ENCODE measurements at regions of chr16 and their contacts with region 1.

Region 1: GRCh38 chr16:85821441-85822135 is 22.1 kb downstream of the COX4I1 start:
- DNase-seq: peak; percentile 79
- ATAC-seq: peak; percentile 90 to 91

Region 2: GRCh38 chr16:85986931-85987749 is 165.6 kb after region 1 on chr16:
- intact Hi-C with region 1: loop called (anchors 2 to 10 kb)
- DNase-seq: no peak
- ATAC-seq: peak; percentile 5 to 13

Region 3: GRCh38 chr16:86016201-86016871 is 194.7 kb after region 1 on chr16:
- intact Hi-C with region 1: loop called (anchors 1 to 2 kb)
- DNase-seq: no peak
- ATAC-seq: peak; percentile 37 to 61

Measured in left cardiac atrium (tissue), 4 donors.